ENCODE measurements at regions of chr16 and their contacts with region 1.

Region 1: DNA sequence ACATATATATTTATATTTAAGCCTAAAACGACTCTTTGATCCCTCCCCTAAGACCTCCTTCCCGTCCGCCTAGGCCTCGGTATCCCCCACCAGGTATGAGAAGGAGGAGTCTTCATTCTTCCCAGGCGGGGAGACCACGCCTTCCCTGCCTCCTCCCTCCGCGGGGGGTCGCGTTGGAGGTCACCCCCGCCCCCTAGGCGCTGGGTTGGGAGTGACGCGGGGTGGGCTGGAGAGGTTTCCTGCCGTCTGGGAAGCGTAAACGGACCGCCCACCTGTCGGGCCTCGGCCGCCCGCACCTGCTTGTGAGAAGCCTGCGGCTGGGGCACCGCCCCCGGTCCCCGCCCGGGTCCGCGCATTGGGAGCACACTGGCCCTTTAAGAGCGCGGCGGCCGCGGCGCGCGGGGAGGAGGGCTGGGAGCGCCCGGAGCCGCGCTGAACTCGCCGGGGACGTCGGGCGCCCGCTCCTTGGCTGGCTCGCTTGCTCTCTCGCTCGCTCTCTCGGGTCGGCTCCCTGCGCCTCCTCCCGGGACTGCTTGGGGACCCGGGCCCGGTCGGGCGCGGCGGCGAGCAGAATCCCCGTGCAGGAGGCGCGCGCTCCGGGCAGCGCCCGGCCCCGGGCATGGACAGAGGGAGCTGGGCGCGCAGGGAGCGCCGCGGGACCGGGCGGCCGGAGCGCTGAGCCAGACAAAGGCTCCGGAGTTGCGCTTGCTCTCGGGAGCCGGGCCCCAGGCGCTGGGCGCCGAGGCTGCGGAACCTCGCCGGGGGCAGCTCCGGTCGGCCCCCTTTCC is at the start of gene MMP15:
- DNase-seq: peak; percentile 55
- H3K4me3 ChIP-seq: peak within 1 kb of the TSS; percentile 44 to 64 (median 51)
- H3K27ac ChIP-seq: no peak within 1 kb of the TSS
- H3K4me1 ChIP-seq: peaks cover 19% of the 10 kb centered on the region
- H3K27me3 ChIP-seq: peaks cover 0 to 8% of the 10 kb centered on the region in 2 experiments
- CTCF ChIP-seq: no peak
- POLR2A ChIP-seq: no peak
- total RNA-seq, gene MMP15: 13.1 and 16.0 TPM in 2 replicates

Region 2: DNA sequence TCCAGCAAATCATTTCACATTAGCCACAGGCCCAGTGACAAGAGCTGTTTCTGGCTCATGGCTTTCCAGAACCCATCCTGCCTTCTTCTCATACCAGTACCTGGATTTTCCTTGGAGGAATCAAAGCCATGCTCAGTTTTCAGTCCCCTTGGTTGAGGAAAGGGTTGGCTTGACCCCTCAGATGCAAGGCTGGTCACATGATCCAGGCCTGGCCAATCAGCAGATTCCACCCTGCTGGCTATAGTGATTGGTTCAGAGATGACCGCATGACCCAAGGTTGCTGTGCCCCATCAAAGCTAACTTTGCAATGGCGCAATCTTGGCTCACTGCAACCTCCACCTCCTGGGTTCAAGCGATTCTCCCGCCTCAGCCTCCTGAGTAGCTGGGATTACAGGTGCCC is 45.0 kb after region 1 on chr16:
- CTCF ChIA-PET with region 1: no interaction called
- POLR2A ChIA-PET with region 1: no interaction called
- dilution Hi-C with region 1: no loop called
- intact Hi-C with region 1: no loop called
- DNase-seq: no peak
- H3K4me3 ChIP-seq: no peak overlapping the region
- H3K27ac ChIP-seq: no peak overlapping the region
- H3K4me1 ChIP-seq: no peaks in the 10 kb centered on the region
- H3K27me3 ChIP-seq: no peaks in the 10 kb centered on the region
- CTCF ChIP-seq: no peak
- POLR2A ChIP-seq: no peak

Region 3: DNA sequence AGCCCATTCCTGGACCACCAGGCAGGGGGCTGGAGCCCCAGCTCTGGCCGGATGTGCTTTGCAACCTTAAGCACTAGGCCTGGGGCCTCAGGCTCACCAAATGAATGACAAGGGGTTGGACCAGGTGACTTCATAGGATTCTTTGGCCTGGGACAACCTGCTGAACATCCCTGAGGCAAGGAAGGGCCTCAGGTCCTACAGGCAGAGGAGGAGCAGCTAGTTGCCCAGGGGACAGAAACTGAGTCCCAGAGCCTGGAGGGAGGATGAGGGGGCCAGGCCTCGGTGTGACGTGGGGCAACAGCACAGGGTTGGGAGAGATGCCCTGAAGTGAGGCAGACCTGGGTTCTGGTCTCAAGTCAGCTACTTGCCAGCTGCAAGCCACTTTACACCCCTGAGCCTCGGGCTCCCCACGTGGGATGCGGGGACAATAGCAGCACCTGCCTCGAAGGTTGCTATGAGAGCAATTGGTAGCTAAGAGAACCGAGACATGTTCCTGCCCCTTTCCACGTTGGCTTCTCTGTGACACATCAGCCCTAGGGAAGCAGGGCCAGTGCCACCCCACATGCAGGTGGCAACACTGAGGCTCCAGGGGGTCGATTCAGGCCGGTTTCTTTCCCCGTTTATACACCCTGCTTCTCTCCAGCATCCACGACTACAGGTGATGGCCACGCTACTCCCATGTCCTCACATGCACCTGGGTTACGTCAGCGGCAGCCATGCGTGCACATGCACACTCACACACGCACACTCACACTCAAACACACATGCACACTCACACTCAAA is 61.1 kb after region 1 on chr16:
- CTCF ChIA-PET with region 1: no interaction called
- POLR2A ChIA-PET with region 1: no interaction called
- dilution Hi-C with region 1: no loop called
- intact Hi-C with region 1: loop called (anchors 1 kb)
- DNase-seq: no peak
- H3K4me3 ChIP-seq: no peak overlapping the region
- H3K27ac ChIP-seq: no peak overlapping the region
- H3K4me1 ChIP-seq: peaks cover 7% of the 10 kb centered on the region
- H3K27me3 ChIP-seq: no peaks in the 10 kb centered on the region
- CTCF ChIP-seq: no peak
- POLR2A ChIP-seq: no peak

Region 4: GRCh38 chr16:58098207-58099096 is 72.9 kb after region 1 on chr16:
- CTCF ChIA-PET with region 1: interaction called, 7 read pairs
- POLR2A ChIA-PET with region 1: no interaction called
- dilution Hi-C with region 1: no loop called
- intact Hi-C with region 1: loop called (anchors 2 kb)
- DNase-seq: no peak
- H3K4me3 ChIP-seq: no peak overlapping the region
- H3K27ac ChIP-seq: no peak overlapping the region
- H3K4me1 ChIP-seq: no peaks in the 10 kb centered on the region
- H3K27me3 ChIP-seq: no peaks in the 10 kb centered on the region
- CTCF ChIP-seq: no peak
- POLR2A ChIP-seq: no peak

Region 5: DNA sequence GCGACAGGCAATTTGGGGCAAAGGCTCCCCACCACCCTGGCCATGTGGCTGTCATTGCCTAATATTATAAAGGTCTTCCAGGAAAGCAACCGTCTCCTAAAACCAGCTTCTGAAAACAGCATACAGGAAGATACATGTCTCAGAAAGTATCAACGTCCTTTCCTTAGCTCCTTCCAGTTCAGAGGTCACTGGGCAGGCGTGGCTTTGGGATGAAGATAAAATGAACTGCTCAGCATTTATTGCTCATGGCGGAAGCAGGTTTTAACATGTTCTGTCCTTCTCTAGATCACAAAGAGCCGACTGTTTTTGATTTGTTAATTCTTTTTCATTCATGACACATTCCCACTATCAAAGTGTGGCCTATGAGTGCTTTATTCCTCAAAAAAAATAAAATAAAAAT is 95.6 kb after region 1 on chr16:
- CTCF ChIA-PET with region 1: interaction called, 81 read pairs
- POLR2A ChIA-PET with region 1: interaction called, 3 read pairs
- dilution Hi-C with region 1: no loop called
- intact Hi-C with region 1: loop called (anchors 1 kb)
- DNase-seq: peak; percentile 56
- H3K4me3 ChIP-seq: no peak overlapping the region
- H3K27ac ChIP-seq: peak overlapping the region; percentile 39
- H3K4me1 ChIP-seq: peaks cover 28% of the 10 kb centered on the region
- H3K27me3 ChIP-seq: no peaks in the 10 kb centered on the region
- CTCF ChIP-seq: no peak
- POLR2A ChIP-seq: no peak

Region 6: GRCh38 chr16:58129097-58129936 is 103.8 kb after region 1 on chr16 and contains the start of gene CFAP20:
- CTCF ChIA-PET with region 1: interaction called, 48 read pairs
- POLR2A ChIA-PET with region 1: interaction called, 8 read pairs
- dilution Hi-C with region 1: no loop called
- intact Hi-C with region 1: no loop called
- DNase-seq: peak; percentile 100
- H3K4me3 ChIP-seq: peak within 1 kb of the TSS; percentile 64 to 72 (median 72)
- H3K27ac ChIP-seq: peak within 1 kb of the TSS; percentile 67
- H3K4me1 ChIP-seq: peaks cover 22% of the 10 kb centered on the region
- H3K27me3 ChIP-seq: no peaks in the 10 kb centered on the region
- CTCF ChIP-seq: no peak
- POLR2A ChIP-seq: peak; percentile 68
- total RNA-seq, gene CFAP20: 44.7 and 46.8 TPM in 2 replicates

Region 7: GRCh38 chr16:58198022-58198683 is 172.6 kb after region 1 on chr16 and contains the start of gene CSNK2A2:
- CTCF ChIA-PET with region 1: no interaction called
- POLR2A ChIA-PET with region 1: no interaction called
- dilution Hi-C with region 1: no loop called
- intact Hi-C with region 1: loop called (anchors 2 kb)
- DNase-seq: no peak
- H3K4me3 ChIP-seq: peak within 1 kb of the TSS; percentile 51 to 95 (median 77)
- H3K27ac ChIP-seq: peak within 1 kb of the TSS; percentile 33
- H3K4me1 ChIP-seq: peaks cover 17% of the 10 kb centered on the region
- H3K27me3 ChIP-seq: peaks cover 0 to 6% of the 10 kb centered on the region in 2 experiments
- CTCF ChIP-seq: peak; percentile 25 to 58
- POLR2A ChIP-seq: no peak
- total RNA-seq, gene CSNK2A2: 113 and 125 TPM in 2 replicates

Region 8: GRCh38 chr16:58306327-58306726 is 280.8 kb after region 1 on chr16:
- CTCF ChIA-PET with region 1: no interaction called
- POLR2A ChIA-PET with region 1: no interaction called
- dilution Hi-C with region 1: no loop called
- intact Hi-C with region 1: loop called (anchors 2 kb)
- DNase-seq: peak; percentile 30
- H3K4me3 ChIP-seq: no peak overlapping the region
- H3K27ac ChIP-seq: no peak overlapping the region
- H3K4me1 ChIP-seq: no peaks in the 10 kb centered on the region
- H3K27me3 ChIP-seq: peaks cover 4 to 7% of the 10 kb centered on the region in 2 experiments
- CTCF ChIP-seq: peak; percentile 41 to 55
- POLR2A ChIP-seq: no peak

Measured in endothelial cell of umbilical vein (primary cell).